AG04450 (cell line): ENCODE measurements at regions of chr9 and their contacts with region 1.

Region 1: GRCh38 chr9:127450830-127451724 is at the starts of genes LRSAM1 and RPL12:
- DNase-seq: peak; percentile 93
- H3K4me3 ChIP-seq: peak within 1 kb of the TSS; percentile 96
- H3K27ac ChIP-seq: peak within 1 kb of the TSS; percentile 89
- H3K27me3 ChIP-seq: no peaks in the 10 kb centered on the region
- CTCF ChIP-seq: no peak
- polyA plus RNA-seq, gene LRSAM1: 3.4 and 4.8 TPM in 2 replicates
- polyA plus RNA-seq, gene RPL12: 2,379 and 2,541 TPM in 2 replicates

Region 2: GRCh38 chr9:127396808-127397497 is 54.1 kb before region 1 on chr9 and contains the start of gene SLC2A8:
- CTCF ChIA-PET with region 1: no interaction called
- POLR2A ChIA-PET with region 1: interaction called, 13 read pairs
- DNase-seq: peak; percentile 99
- H3K4me3 ChIP-seq: peak within 1 kb of the TSS; percentile 66
- H3K27ac ChIP-seq: no peak within 1 kb of the TSS
- H3K27me3 ChIP-seq: peaks cover 15% of the 10 kb centered on the region
- CTCF ChIP-seq: no peak
- polyA plus RNA-seq, gene SLC2A8: 5.4 and 6.3 TPM in 2 replicates

Region 3: GRCh38 chr9:127423934-127424675 is 27.0 kb before region 1 on chr9 and contains the start of gene ZNF79:
- CTCF ChIA-PET with region 1: no interaction called
- POLR2A ChIA-PET with region 1: interaction called, 10 read pairs
- DNase-seq: peak; percentile 74
- H3K4me3 ChIP-seq: peak within 1 kb of the TSS; percentile 87
- H3K27ac ChIP-seq: peak within 1 kb of the TSS; percentile 58
- H3K27me3 ChIP-seq: no peaks in the 10 kb centered on the region
- CTCF ChIP-seq: no peak
- polyA plus RNA-seq, gene ZNF79: 5.2 and 5.6 TPM in 2 replicates

Region 4: DNA sequence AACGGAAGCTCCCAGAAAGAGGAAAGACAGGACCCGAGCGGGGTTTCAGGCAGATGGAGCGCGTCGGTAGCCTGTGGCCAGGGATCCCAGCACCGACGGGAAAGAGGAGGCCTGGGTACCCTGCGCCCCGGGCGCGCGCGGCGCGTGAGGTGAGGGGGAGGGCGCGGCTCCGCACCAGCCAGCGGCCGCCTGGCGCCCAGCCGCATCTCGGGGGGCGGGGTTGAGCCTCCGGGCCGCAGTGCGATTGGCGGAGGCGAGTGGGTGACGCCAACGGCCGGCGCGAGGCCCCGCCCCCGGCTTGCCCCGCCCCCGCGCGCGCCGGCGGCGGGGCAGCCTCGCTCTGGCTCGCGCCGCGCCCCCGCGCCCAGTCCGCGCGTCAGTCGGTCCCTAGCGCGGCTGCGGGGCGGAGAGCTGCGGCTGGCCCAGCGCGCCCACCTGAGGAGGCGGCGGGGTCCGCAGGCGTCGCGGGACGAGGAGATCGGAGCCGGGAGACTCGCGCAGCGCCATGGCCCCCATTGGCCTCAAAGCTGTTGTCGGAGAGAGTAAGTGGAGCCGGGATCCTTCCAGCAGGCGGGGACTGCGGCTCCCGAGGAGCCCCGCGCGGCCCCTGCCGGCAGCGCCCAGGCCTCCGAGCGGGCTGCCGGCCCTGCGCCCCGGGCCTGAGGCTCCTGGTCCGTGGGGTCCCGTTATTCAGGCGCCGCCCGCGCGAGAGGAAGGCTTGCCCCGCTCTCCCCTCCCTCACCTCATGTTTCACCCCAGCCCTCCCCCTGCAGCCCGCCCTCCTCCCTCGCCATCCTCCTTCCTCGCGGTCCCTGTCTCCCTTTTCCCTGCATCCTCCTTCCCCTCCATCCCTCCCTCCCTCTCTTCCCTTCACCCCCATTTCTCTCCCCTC is 161.1 kb after region 1 on chr9 and contains the start of gene STXBP1:
- CTCF ChIA-PET with region 1: interaction called, 7 read pairs
- POLR2A ChIA-PET with region 1: interaction called, 10 read pairs
- DNase-seq: no peak
- H3K4me3 ChIP-seq: peak within 1 kb of the TSS; percentile 82
- H3K27ac ChIP-seq: peak within 1 kb of the TSS; percentile 31
- H3K27me3 ChIP-seq: peaks cover 5% of the 10 kb centered on the region
- CTCF ChIP-seq: peak; percentile 26
- polyA plus RNA-seq, gene STXBP1: 19.8 and 25.0 TPM in 2 replicates